ENCODE measurements at regions of chr1 and their contacts with region 1.

Region 1: DNA sequence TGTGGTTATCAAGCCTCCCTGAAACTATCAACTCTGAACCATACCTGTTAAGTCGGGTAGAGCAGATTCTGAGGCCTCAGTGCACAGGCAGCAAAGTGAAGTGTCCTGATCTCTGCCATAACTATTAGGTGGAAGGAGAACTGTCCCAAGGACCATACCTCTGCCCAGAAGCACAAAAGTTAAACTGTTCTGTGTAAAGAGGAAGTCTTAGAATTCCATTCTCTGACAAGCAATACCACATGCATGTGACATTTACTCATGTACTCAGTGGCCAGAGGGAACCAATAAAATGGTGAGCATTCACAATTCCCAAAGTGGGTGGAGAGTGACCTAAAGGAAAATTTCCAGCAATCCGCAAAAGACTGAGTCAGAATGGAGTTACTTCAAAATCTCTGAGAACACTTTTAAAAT is 61.0 kb downstream of the TOR3A start:
- DNase-seq: no peak
- H3K4me3 Mint-ChIP-seq: peak overlapping the region; percentile 38
- H3K27ac Mint-ChIP-seq: peak overlapping the region; percentile 76
- H3K4me1 Mint-ChIP-seq: peaks cover 22% of the 10 kb centered on the region
- H3K27me3 Mint-ChIP-seq: no peaks in the 10 kb centered on the region

Region 2: GRCh38 chr1:179034720-179035119 is 108.2 kb before region 1 on chr1:
- intact Hi-C with region 1: loop called (anchors 5 kb)
- DNase-seq: no peak
- H3K4me3 Mint-ChIP-seq: no peak overlapping the region
- H3K27ac Mint-ChIP-seq: peak overlapping the region; percentile 82
- H3K4me1 Mint-ChIP-seq: peaks cover 77% of the 10 kb centered on the region
- H3K27me3 Mint-ChIP-seq: no peaks in the 10 kb centered on the region

Region 3: GRCh38 chr1:179081687-179082332 is 61.1 kb before region 1 on chr1 and contains the start of gene TOR3A:
- intact Hi-C with region 1: loop called (anchors 5 kb)
- DNase-seq: peak; percentile 75
- H3K4me3 Mint-ChIP-seq: peak within 1 kb of the TSS; percentile 97
- H3K27ac Mint-ChIP-seq: peak within 1 kb of the TSS; percentile 96
- H3K4me1 Mint-ChIP-seq: peaks cover 20% of the 10 kb centered on the region
- H3K27me3 Mint-ChIP-seq: no peaks in the 10 kb centered on the region
- total RNA-seq, gene TOR3A: 34.1 and 35.3 TPM in 2 replicates

Region 4: GRCh38 chr1:179129702-179130473 is 13.0 kb before region 1 on chr1:
- intact Hi-C with region 1: loop called (anchors 1 kb)
- DNase-seq: peak; percentile 23
- H3K4me3 Mint-ChIP-seq: peak overlapping the region; percentile 72
- H3K27ac Mint-ChIP-seq: peak overlapping the region; percentile 93
- H3K4me1 Mint-ChIP-seq: peaks cover 13% of the 10 kb centered on the region
- H3K27me3 Mint-ChIP-seq: no peaks in the 10 kb centered on the region

Region 5: DNA sequence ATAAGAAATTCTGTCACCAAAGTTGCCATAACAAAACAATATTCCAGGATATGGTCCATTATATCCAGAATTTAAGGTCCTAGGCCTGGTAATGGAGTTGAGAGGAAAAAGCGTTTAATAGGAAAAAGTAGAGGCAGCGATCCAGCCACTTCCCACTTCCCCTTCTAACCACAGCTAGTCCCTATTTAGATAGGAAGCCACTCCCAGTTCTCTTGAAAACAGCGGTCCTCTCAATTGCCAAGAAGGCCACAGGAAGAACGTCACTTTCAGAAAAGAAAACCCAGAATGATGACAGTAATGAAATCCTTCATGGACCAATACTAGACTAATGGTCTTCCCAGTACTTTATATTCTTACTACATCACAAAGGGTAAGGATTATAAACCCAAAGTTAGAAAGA is 48.0 kb after region 1 on chr1:
- intact Hi-C with region 1: loop called (anchors 5 kb)
- DNase-seq: no peak
- H3K4me3 Mint-ChIP-seq: no peak overlapping the region
- H3K27ac Mint-ChIP-seq: peak overlapping the region; percentile 42
- H3K4me1 Mint-ChIP-seq: peaks cover 15% of the 10 kb centered on the region
- H3K27me3 Mint-ChIP-seq: no peaks in the 10 kb centered on the region

Region 6: DNA sequence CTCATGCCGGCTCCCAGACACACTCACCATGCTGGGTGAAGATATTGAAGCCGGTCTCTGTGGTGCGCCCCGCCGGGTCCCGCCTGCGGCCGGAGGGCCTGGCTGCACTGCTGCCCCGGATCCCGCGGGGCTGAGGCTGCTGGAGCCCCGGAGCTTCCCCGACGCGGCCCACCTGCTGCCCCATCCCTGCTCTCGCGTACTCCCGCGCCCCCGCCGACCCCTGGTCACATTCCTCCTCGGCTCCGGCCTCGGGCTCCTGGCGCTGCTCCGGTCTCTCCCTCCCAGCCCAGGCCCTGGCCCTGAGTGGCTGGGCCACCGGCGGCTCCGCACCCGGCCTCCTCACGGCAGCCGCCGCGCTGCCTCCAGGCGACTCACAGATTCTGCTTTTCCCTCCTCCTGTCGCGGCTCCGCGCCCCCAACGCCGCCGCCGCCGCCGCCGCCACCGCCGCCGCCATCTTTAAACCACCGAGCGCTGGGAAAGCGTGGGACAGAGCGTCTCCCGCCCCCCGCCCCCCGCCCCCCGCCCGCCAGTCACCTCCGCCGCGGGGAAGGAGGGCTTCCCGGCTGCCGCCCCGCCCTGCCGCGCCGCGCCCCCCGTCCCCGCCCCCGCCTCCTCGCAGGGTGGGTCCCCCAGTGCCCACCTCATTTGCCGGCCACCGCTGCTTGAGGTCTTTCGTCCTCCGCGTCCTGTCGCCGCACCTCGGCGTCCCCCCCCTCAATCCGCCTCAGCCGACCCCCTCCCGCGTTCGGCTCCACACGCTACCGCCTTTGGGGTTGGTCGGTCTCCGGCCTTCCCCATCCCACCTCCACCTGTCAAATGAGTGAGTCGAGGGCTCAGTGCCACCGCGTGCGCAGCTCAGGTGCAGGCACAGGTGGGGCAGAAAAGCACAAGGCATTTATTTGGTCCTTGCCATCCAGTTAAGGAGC is 86.6 kb after region 1 on chr1 and contains the start of gene ABL2:
- intact Hi-C with region 1: loop called (anchors 5 kb)
- DNase-seq: peak; percentile 34
- H3K4me3 Mint-ChIP-seq: peak within 1 kb of the TSS; percentile 91
- H3K27ac Mint-ChIP-seq: peak within 1 kb of the TSS; percentile 79
- H3K4me1 Mint-ChIP-seq: peaks cover 24% of the 10 kb centered on the region
- H3K27me3 Mint-ChIP-seq: peaks cover 8% of the 10 kb centered on the region
- total RNA-seq, gene ABL2: 7.7 and 8.5 TPM in 2 replicates

Region 7: GRCh38 chr1:179251675-179252074 is 108.8 kb after region 1 on chr1:
- intact Hi-C with region 1: no loop called
- DNase-seq: no peak
- H3K4me3 Mint-ChIP-seq: no peak overlapping the region
- H3K27ac Mint-ChIP-seq: no peak overlapping the region
- H3K4me1 Mint-ChIP-seq: no peaks in the 10 kb centered on the region
- H3K27me3 Mint-ChIP-seq: no peaks in the 10 kb centered on the region

Region 8: DNA sequence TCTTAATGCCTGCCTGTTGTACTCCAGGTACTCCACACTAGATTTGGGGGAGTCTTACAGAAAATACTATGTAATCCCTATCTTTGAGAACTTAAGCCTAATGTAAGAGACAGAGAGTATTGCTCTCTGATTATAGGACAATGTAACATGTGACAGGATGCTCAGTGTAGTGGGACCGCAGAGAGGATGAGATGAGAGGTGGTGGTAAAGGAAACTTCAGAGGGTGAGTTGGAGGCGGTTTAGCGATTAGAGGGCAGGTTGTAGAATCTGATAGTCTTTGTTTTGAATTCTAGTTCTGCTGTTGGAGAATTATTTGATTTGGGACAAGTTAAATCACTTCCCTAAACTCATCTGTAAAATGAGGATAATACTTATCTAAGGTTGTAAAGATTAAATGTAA is 156.1 kb after region 1 on chr1:
- intact Hi-C with region 1: loop called (anchors 5 kb)
- DNase-seq: peak; percentile 43
- H3K4me3 Mint-ChIP-seq: peak overlapping the region; percentile 13
- H3K27ac Mint-ChIP-seq: peak overlapping the region; percentile 38
- H3K4me1 Mint-ChIP-seq: peaks cover 52% of the 10 kb centered on the region
- H3K27me3 Mint-ChIP-seq: no peaks in the 10 kb centered on the region